BJ (cell line): ENCODE measurements at regions of chr11 and their contacts with region 1.

Region 1: DNA sequence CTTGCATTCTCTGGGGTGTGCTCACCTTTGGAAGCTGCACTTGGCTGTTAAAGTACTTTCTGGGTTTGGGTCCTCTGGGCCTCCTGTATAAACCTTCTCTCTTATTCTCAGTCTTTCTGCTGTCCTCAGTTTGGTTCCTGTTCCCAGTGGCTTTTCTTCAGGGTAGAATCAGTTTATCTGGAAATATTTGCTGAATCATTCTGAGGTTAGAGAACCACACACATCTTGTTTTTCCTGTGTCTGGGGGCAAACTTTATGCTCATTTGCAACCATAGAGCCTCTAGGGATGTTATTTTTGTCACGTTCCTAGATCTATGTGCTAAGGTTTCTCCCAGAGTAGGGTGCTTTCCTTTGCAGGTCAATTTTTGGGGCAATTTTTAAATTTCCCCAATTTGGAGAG is 224.3 kb upstream of the C11orf87 start:
- DNase-seq: no peak
- H3K4me3 ChIP-seq: no peak overlapping the region
- H3K27me3 ChIP-seq: no peaks in the 10 kb centered on the region; the same call in 1 of the 2 replicates
- CTCF ChIP-seq: no peak

Region 2: GRCh38 chr11:108527382-108527781 is 670.3 kb before region 1 on chr11:
- CTCF ChIA-PET with region 1: no interaction called
- POLR2A ChIA-PET with region 1: interaction called, 15 read pairs
- DNase-seq: no peak
- H3K4me3 ChIP-seq: no peak overlapping the region
- H3K27me3 ChIP-seq: no peaks in the 10 kb centered on the region
- CTCF ChIP-seq: no peak

Region 3: GRCh38 chr11:109048098-109048497 is 149.6 kb before region 1 on chr11:
- CTCF ChIA-PET with region 1: no interaction called
- POLR2A ChIA-PET with region 1: no interaction called
- DNase-seq: no peak
- H3K4me3 ChIP-seq: no peak overlapping the region
- H3K27me3 ChIP-seq: no peaks in the 10 kb centered on the region
- CTCF ChIP-seq: no peak

Region 4: GRCh38 chr11:109184376-109184775 is 13.3 kb before region 1 on chr11:
- CTCF ChIA-PET with region 1: no interaction called
- POLR2A ChIA-PET with region 1: no interaction called
- DNase-seq: no peak
- H3K4me3 ChIP-seq: no peak overlapping the region
- H3K27me3 ChIP-seq: no peaks in the 10 kb centered on the region
- CTCF ChIP-seq: no peak

Region 5: DNA sequence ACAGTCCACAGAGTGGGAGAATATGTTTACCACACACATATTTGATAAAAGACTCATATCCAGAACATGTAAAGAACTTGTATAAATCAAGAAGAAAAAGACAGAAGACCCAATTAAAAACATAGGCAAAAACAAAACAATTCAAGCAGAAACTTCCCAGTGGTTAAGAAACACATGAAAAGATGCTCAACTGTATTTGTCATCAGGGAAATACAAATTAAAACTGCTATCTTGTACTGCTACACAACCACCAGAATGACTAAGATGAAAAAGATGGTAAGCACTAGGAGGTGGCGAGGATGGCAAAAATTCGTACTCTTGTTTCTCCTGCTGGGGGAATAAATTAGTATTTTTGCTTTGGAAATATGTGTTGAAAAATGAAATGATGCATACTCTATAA is 32.0 kb after region 1 on chr11:
- CTCF ChIA-PET with region 1: no interaction called
- POLR2A ChIA-PET with region 1: no interaction called
- DNase-seq: no peak
- H3K4me3 ChIP-seq: no peak overlapping the region
- H3K27me3 ChIP-seq: no peaks in the 10 kb centered on the region
- CTCF ChIP-seq: no peak